ENCODE measurements at regions of chr2 and their contacts with region 1.

Region 1: GRCh38 chr2:175154661-175155082 is 13.3 kb downstream of the ATF2 start:
- DNase-seq: no peak
- ATAC-seq: peak; percentile 17
- H3K4me3 ChIP-seq: no peak overlapping the region
- H3K4me3 Mint-ChIP-seq: no peak overlapping the region
- H3K27ac ChIP-seq: no peak overlapping the region
- H3K27ac Mint-ChIP-seq: no peak overlapping the region
- H3K4me1 ChIP-seq: no peaks in the 10 kb centered on the region
- H3K4me1 Mint-ChIP-seq: peaks cover 57% of the 10 kb centered on the region
- H3K27me3 ChIP-seq: no peaks in the 10 kb centered on the region
- H3K27me3 Mint-ChIP-seq: no peaks in the 10 kb centered on the region
- CTCF ChIP-seq: no peak

Region 2: DNA sequence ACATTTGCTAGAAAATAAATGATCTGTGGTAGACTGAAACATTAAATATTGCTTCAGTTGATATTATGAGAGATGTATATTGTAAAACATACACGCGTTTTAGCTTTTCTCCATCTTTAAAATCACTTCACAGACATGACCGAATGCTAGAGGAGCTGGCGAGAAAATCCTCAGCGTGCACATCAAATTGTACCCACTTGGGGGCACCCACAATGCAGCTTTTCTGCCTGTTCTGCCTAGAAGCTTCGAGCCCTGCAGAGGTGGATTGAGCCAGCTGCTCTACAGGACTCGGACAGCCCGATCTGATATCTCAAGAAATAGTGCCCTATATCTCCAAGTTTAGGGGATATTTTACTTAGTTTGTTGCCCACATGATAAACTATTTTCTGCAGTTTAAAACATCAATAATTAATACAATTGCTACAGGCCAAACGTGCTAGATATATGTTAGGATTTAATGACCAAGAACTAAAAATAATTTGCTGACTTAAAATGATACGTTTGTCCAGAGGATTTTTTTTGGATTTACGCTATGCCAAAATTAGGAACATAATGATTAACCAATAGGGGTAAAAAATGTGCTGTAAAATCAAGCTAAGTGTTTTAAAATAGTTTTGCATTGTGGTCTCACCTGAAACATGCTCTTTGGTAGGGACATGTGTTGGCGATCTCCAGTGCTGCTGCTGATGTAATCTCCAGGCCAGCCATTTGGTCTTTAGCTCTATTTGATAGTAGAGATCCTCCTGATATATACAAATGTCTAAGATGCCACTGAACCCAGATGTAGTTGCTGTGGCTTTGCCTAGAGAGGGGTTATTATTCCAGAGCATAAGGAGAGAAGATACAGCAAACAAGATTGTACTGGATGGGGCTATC is 49.2 kb after region 1 on chr2:
- CTCF ChIA-PET with region 1: no interaction called
- POLR2A ChIA-PET with region 1: no interaction called
- intact Hi-C with region 1: loop called in 1 of 2 experiments (anchors 5 kb)
- DNase-seq: peak in 13 of 14 experiments; percentile 4 to 60 (median 28)
- ATAC-seq: peak; percentile 67
- H3K4me3 ChIP-seq: no peak overlapping the region
- H3K4me3 Mint-ChIP-seq: no peak overlapping the region
- H3K27ac ChIP-seq: no peak overlapping the region
- H3K27ac Mint-ChIP-seq: no peak overlapping the region
- H3K4me1 ChIP-seq: no peaks in the 10 kb centered on the region
- H3K4me1 Mint-ChIP-seq: peaks cover 6% of the 10 kb centered on the region
- H3K27me3 ChIP-seq: peaks cover 0 to 3% of the 10 kb centered on the region in 2 experiments
- H3K27me3 Mint-ChIP-seq: peaks cover 32% of the 10 kb centered on the region
- CTCF ChIP-seq: peak; percentile 47